ENCODE measurements at regions of chr12 and their contacts with region 1.

Region 1: GRCh38 chr12:48875944-48876515 is 10.4 kb upstream of the RND1 start:
- DNase-seq: no peak
- H3K4me3 ChIP-seq: no peak overlapping the region
- H3K27ac ChIP-seq: no peak overlapping the region
- H3K4me1 ChIP-seq: no peaks in the 10 kb centered on the region
- CTCF ChIP-seq: no peak

Region 2: GRCh38 chr12:48110691-48111315 is 765.2 kb before region 1 on chr12:
- CTCF ChIA-PET with region 1: no interaction called
- POLR2A ChIA-PET with region 1: no interaction called
- intact Hi-C with region 1: no loop called
- DNase-seq: no peak
- H3K4me3 ChIP-seq: no peak overlapping the region
- H3K27ac ChIP-seq: no peak overlapping the region
- H3K4me1 ChIP-seq: peaks cover 19% of the 10 kb centered on the region
- CTCF ChIP-seq: no peak

Region 3: GRCh38 chr12:48865434-48866290 is 10.4 kb before region 1 on chr12 and contains the start of gene RND1:
- CTCF ChIA-PET with region 1: no interaction called
- POLR2A ChIA-PET with region 1: interaction called, 14 read pairs
- intact Hi-C with region 1: no loop called
- DNase-seq: peak; percentile 98
- H3K4me3 ChIP-seq: peak within 1 kb of the TSS; percentile 86
- H3K27ac ChIP-seq: peak within 1 kb of the TSS; percentile 45
- H3K4me1 ChIP-seq: peaks cover 36% of the 10 kb centered on the region
- CTCF ChIP-seq: peak; percentile 50
- total RNA-seq, gene RND1: 6.5 and 7.3 TPM in 2 replicates

Region 4: DNA sequence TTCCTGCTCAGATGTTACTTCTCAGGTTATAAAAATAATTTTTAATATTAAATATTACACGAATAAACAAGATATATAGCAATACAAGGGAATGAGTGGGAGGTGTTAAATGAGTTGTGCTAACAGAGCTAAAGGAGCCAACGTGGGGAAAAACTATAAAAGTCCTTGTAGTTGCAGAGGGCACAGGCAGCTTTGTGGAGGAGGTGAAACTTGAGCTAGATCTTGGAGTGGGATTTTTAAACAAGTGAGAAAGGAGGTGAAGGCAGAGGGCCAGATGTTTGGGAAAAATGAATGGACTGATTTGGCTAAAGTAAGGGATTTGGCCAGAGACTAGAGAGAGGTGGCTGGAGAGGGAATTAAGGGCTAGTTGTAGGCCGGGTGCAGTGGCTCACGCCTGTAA is 54.4 kb after region 1 on chr12:
- CTCF ChIA-PET with region 1: no interaction called
- POLR2A ChIA-PET with region 1: no interaction called
- intact Hi-C with region 1: no loop called
- DNase-seq: no peak
- H3K4me3 ChIP-seq: no peak overlapping the region
- H3K27ac ChIP-seq: no peak overlapping the region
- H3K4me1 ChIP-seq: peaks cover 7% of the 10 kb centered on the region
- CTCF ChIP-seq: no peak